Activated CD8-positive, alpha-beta memory T cell treated with anti-CD3 and anti-CD28 coated beads, Interleukin-2, amount 10 ng/mL, durations not matched to agents 7 days and 5 days (primary cell): ENCODE measurements at regions of chr7 and their contacts with region 1.

Region 1: GRCh38 chr7:83936056-83936708 is 258.4 kb downstream of the SEMA3A start:
- DNase-seq: peak; percentile 43
- ATAC-seq: peak; percentile 67
- H3K4me3 Mint-ChIP-seq: no peak overlapping the region
- H3K27ac Mint-ChIP-seq: no peak overlapping the region
- H3K4me1 Mint-ChIP-seq: no peaks in the 10 kb centered on the region
- H3K27me3 Mint-ChIP-seq: no peaks in the 10 kb centered on the region

Region 2: DNA sequence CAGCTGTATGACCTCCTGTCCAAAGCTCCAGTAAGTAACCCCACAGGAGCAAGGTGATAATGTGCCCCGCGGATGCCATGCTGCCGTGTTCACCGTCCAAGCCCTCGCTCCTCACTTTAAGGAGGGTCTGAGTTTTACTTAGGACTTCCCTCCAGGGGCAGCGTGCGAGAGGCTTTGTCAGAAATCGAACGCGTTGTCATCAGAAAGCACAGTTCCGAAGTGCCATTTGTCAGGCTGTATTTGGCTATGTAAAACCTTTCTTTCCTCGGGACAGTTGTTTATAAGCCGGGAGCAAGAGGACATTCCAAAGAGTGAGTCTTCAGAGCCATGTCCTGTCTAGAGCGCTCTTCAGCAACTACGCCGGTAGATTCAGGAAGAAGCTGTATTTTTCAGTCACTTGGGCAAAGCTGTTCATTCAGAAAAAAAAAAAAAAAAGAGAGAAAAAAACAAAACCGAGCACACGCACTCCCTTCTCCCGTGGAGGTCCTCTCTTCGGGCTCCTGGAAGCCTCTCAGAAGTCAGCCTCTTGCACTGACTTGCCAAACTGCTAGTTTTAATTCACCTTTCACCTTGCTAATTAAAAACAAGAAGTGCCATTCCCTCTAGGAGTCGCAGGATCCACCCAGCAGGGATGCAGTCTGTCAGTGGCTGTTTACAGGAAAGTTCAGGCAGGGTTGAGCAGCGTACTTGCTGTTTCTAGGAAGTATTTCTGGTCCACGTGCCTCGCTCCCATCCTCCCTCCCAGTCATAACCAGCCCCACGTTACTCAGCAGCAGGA is 287.5 kb before region 1 on chr7 and contains the start of gene SEMA3E:
- CTCF ChIA-PET with region 1: no interaction called
- DNase-seq: no peak
- ATAC-seq: no peak
- H3K4me3 Mint-ChIP-seq: no peak within 1 kb of the TSS
- H3K27ac Mint-ChIP-seq: no peak within 1 kb of the TSS
- H3K4me1 Mint-ChIP-seq: no peaks in the 10 kb centered on the region
- H3K27me3 Mint-ChIP-seq: peaks cover 4% of the 10 kb centered on the region
- total RNA-seq, gene SEMA3E: not detected

Region 3: GRCh38 chr7:83947260-83947659 is 11.1 kb after region 1 on chr7:
- CTCF ChIA-PET with region 1: interaction called, 10 read pairs
- DNase-seq: no peak
- ATAC-seq: no peak
- H3K4me3 Mint-ChIP-seq: no peak overlapping the region
- H3K27ac Mint-ChIP-seq: no peak overlapping the region
- H3K4me1 Mint-ChIP-seq: no peaks in the 10 kb centered on the region
- H3K27me3 Mint-ChIP-seq: no peaks in the 10 kb centered on the region

Region 4: DNA sequence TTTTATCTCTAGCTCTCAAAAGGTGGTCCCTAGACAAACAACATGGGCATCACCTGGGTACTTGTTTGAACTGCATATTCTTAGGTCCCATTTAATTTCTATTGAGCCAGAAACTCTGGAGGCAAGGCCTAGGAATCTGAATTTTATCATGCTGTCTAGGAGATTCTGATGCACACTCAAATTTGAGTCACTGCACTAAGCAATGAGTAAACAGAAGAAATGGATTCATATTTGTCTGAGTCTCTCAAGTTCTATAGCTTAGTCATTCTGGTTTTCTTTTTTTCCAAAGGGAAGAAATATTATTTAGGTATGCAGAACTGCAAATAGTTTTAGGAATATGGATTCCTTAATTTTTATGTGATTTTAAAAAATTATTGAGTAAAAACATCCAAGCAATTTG is 72.9 kb after region 1 on chr7:
- CTCF ChIA-PET with region 1: no interaction called
- DNase-seq: no peak
- ATAC-seq: no peak
- H3K4me3 Mint-ChIP-seq: no peak overlapping the region
- H3K27ac Mint-ChIP-seq: no peak overlapping the region
- H3K4me1 Mint-ChIP-seq: no peaks in the 10 kb centered on the region
- H3K27me3 Mint-ChIP-seq: no peaks in the 10 kb centered on the region